Heart right ventricle (tissue), 16 donors: ENCODE measurements at regions of chr1 and their contacts with region 1.

Region 1: DNA sequence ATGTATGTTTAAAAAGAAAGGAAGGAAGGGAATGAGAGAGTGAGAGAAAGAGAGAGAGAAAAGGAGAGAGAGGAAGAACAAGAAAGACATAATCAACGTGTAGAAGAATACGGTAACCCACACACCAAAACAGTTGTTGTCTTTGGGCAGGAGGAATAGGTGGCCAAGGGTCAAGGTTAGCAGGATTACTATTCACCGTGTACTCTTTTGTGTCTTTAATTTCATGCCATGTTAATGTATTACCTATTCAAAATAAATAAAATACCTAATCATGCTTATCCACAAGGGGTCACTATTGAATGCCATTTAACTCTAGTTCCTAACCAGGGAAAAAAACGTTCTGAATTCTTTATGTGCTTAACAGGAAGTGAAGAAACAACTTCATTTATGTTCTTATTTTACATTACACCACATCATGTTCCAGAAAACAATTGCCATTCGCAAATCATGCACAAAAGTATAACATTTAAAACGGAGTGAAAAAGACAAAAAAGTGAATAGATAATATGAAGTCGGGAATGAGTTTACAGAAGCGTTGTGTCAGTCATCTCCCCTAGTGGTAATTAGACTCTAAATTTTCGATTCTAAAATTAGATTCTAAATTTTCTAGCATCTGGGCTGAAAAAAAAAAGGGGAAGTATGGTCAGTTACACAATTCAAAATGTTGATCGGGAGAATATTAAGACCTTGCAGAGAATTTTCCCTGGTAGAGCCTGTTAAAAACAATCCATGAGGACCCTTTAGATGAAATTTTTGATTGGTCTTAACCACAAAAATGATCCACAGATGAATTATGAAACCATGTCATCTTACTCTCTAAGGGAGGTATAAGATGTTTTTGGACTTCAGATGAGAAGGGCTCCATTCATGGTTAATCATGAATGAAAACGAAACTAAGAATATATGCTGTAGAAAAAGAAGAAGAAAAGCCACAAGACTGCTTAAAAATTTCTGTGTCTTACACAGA is 700 bp upstream of the KMO start:
- DNase-seq: no peak
- ATAC-seq: peak in 7 of 8 donors; percentile 70 to 78 (median 75)
- H3K4me3 ChIP-seq: peak overlapping the region in 9 of 10 donors; percentile 21 to 60 (median 49)
- H3K27ac ChIP-seq: peak overlapping the region in 3 of 10 donors; percentile 11 to 82 (median 25)
- H3K4me1 ChIP-seq: peaks cover 0 to 9% (median 0%) of the 10 kb centered on the region in 9 donors
- H3K27me3 ChIP-seq: peaks cover 0 to 23% (median 11%) of the 10 kb centered on the region in 7 donors
- CTCF ChIP-seq: peak; percentile 30 to 74 (median 61)

Region 2: GRCh38 chr1:241627453-241628259 is 96.2 kb after region 1 on chr1:
- intact Hi-C with region 1: loop called in 6 of 10 experiments (anchors 1 to 10 kb)
- DNase-seq: no peak
- ATAC-seq: peak in 1 of 8 donors; percentile 31
- H3K4me3 ChIP-seq: peak overlapping the region in 1 of 10 donors; percentile 19
- H3K27ac ChIP-seq: no peak overlapping the region
- H3K4me1 ChIP-seq: peaks cover 0 to 13% (median 2%) of the 10 kb centered on the region in 9 donors
- H3K27me3 ChIP-seq: no peaks in the 10 kb centered on the region
- CTCF ChIP-seq: peak in 8 of 9 donors; percentile 7 to 67 (median 56)

Region 3: DNA sequence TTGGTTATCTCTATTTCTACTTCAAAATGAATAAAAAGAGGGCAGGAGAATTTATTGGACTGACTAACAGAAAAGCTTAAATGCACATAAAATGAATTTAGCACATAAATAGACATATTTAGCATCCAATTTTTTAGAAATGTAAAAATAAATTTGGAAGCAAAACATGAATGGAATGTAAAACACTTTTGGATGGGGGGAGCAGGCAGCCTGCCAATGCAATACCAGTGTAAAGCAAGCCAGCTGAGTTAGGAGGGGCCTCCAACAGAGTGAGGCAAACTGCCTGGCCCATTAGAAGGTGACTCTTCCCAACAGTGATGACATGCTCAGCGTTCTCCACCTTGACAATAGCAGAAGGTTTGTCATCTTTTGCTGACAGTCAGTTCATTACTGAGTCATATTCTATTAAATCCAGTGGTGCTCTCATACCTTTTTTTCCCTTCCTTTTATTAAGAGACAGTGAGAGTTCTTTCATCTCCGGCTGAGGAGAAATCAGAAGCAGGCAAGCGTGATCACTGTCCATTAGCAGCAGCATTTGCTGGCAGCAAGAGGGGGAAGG is 297.1 kb after region 1 on chr1:
- intact Hi-C with region 1: loop called in 3 of 10 experiments (anchors 5 to 10 kb)
- DNase-seq: no peak
- ATAC-seq: peak in 1 of 8 donors; percentile 78
- H3K4me3 ChIP-seq: no peak overlapping the region
- H3K27ac ChIP-seq: no peak overlapping the region
- H3K4me1 ChIP-seq: peaks cover 0 to 20% (median 0%) of the 10 kb centered on the region in 9 donors
- H3K27me3 ChIP-seq: peaks cover 0 to 6% (median under 1%) of the 10 kb centered on the region in 7 donors
- CTCF ChIP-seq: no peak

Region 4: DNA sequence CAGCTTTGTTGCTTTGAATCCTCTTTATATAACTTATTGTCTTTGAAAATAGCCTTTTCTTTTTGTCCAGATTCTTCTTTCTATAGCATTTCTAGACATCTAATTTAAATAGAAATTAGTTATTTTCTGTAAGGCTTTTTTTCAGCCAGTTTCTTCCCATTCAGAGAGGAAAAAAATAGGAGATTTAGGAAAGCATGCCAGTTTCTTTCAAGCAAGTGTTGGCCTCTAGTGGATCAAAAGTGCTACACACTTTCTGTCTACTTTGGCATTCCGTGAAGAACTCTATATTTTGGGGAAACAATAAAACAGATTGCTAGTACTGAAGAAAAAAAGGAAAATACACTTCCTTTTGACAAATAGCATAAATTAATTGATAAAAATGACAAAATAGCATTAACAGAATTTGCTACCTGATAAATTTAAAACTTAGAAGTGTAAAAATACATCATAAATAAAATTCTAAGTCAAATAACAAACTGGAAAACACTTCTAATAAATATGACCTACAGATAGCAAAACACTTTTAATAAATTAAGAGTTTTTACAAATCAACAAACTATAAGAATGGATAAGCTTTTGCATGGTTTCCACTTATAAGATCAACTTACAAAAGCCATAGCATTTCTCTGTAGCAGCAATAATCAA is 303.4 kb after region 1 on chr1:
- intact Hi-C with region 1: loop called in 4 of 10 experiments (anchors 5 to 10 kb)
- DNase-seq: no peak
- ATAC-seq: no peak
- H3K4me3 ChIP-seq: no peak overlapping the region
- H3K27ac ChIP-seq: no peak overlapping the region
- H3K4me1 ChIP-seq: no peaks in the 10 kb centered on the region
- H3K27me3 ChIP-seq: peaks cover 0 to 17% (median 3%) of the 10 kb centered on the region in 7 donors
- CTCF ChIP-seq: peak in 8 of 9 donors; percentile 26 to 64 (median 52)

Region 5: DNA sequence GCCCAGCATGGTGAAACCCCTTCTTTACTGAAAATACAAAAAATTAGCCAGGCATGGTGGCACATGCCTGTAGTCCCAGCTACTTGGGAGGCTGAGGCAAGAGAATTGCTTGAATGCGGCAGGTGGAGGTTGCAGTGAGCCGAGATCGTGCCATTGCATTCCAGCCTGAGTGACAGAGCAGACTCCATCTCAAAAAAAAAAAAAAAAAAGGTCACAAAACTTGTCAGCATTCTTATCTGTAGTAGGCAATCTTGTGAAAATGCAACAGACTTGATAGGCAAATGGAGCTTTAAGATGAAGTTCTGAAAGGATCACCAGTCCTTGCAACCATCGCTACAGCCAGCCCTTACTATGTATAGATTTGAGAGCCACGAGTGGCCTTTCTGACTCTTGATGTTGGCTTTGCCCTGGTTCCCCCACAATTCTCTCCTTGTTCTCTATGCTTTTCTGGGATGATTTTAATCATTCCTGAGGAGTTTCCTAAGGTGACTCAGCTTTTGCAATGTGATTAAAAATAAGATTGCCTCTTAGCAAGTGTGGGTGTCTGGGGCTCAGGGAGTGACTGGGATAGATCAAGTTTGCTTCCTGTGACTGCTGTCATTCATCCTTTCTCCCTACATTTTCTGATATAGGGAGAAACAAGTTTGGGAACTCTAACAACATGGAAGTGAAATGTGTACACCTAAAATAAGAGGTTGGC is 474.5 kb after region 1 on chr1:
- intact Hi-C with region 1: loop called in 1 of 10 experiments (anchors 10 kb)
- DNase-seq: no peak
- ATAC-seq: no peak
- H3K4me3 ChIP-seq: no peak overlapping the region
- H3K27ac ChIP-seq: no peak overlapping the region
- H3K4me1 ChIP-seq: no peaks in the 10 kb centered on the region
- H3K27me3 ChIP-seq: peaks cover 0 to 4% (median 0%) of the 10 kb centered on the region in 7 donors
- CTCF ChIP-seq: no peak